ENCODE measurements at regions of chr19 and their contacts with region 1.

Region 1: DNA sequence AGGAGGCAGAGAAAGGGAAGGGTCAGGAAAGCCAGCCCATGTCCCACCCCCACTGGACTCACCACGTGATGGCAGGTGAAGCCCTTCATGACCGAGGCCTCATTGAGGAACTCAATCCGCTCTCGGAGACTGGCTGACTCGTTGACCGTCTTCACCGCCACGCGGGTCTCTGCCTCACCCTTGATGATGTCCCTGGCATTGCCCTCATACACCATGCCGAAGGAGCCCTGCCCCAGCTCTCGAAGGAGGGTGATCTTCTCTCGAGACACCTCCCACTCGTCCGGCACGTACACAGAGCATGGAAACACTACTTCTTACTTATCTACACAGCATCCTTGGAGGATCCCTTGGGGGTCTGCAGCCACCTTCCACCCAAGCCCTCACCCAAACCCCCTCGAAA is 55.7 kb downstream of the ZNF557 start:
- DNase-seq: no peak
- ATAC-seq: no peak
- H3K4me3 ChIP-seq: no peak overlapping the region
- H3K27ac ChIP-seq: no peak overlapping the region
- H3K4me1 ChIP-seq: no peaks in the 10 kb centered on the region
- H3K27me3 ChIP-seq: no peaks in the 10 kb centered on the region
- CTCF ChIP-seq: no peak

Region 2: DNA sequence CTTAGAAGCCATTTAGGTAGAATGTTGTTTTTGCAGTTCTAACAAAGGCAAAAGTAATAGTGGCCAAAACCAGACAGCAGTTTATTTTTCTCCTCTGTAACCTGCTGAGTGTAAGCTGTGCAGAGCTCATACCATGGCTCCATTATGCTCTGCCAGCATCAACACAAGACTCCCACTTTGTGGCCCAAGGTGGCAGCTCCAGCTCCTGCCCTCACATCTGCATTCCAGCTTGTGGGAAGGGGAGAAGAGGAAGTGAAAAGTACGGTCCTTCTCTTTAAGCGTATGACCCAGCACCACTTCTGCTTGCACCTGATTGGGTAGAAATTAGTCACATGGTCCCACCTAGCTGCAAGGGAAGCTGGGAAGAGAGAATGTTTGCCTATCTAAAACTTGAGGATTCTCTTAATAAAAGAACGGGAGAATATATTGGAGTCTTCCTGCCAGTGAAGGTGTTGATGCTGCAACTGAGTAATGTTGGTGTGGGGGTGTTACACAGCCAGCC is 218.6 kb before region 1 on chr19:
- CTCF ChIA-PET with region 1: no interaction called
- POLR2A ChIA-PET with region 1: no interaction called
- in situ Hi-C with region 1: no loop called
- intact Hi-C with region 1: no loop called
- DNase-seq: no peak
- ATAC-seq: no peak
- H3K4me3 ChIP-seq: no peak overlapping the region
- H3K27ac ChIP-seq: no peak overlapping the region
- H3K4me1 ChIP-seq: no peaks in the 10 kb centered on the region
- H3K27me3 ChIP-seq: no peaks in the 10 kb centered on the region
- CTCF ChIP-seq: no peak

Region 3: DNA sequence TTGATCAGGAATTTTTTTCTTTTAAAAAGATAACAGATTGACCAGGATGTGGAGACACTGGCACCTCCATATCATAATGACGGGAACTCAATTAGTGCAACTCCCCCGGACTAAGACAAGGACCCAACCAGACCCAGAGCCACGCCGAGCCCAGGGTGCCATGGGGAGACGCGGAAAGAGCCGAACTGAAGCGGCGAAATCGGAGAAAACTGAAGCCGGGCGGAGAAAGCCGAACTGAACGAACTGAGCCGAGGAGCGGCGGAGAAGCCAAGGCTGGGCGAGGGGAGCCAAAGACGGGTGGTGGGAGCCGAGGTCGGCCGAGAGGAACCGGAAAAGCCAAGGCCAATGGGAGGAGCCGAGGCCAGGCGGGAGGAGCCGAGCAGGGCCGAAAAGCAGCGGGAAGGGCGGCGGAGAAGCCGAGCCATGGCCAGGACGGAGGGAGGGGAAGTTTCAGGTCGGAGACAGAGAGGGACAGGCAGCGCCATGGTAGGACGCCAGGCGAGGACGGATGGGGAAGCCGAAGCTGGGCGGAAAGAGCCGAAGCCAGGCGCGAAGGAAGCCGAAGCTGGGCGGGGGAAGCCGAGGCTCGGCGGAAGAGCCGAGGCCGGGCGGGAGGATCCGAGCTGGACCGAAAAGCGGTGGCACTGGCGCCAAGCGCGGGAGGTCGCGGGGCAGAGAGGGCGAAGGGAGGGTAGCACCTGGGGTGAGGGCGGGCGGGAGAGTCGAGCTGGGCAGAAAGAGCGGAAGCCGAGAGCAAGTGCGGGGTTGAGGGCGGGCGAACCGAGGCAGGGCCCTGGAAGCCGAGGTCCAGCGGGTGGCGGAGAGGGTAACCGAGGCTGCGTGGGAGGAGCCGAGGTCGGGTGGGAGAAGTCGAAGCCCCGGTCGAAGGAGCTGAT is 26.3 kb before region 1 on chr19:
- CTCF ChIA-PET with region 1: no interaction called
- POLR2A ChIA-PET with region 1: no interaction called
- in situ Hi-C with region 1: no loop called
- intact Hi-C with region 1: no loop called
- DNase-seq: peak; percentile 53
- ATAC-seq: peak; percentile 95
- H3K4me3 ChIP-seq: peak overlapping the region; percentile 66 to 71
- H3K27ac ChIP-seq: peak overlapping the region; percentile 89
- H3K4me1 ChIP-seq: no peaks in the 10 kb centered on the region; the same call in 1 of the 2 replicates
- H3K27me3 ChIP-seq: no peaks in the 10 kb centered on the region
- CTCF ChIP-seq: no peak

Region 4: DNA sequence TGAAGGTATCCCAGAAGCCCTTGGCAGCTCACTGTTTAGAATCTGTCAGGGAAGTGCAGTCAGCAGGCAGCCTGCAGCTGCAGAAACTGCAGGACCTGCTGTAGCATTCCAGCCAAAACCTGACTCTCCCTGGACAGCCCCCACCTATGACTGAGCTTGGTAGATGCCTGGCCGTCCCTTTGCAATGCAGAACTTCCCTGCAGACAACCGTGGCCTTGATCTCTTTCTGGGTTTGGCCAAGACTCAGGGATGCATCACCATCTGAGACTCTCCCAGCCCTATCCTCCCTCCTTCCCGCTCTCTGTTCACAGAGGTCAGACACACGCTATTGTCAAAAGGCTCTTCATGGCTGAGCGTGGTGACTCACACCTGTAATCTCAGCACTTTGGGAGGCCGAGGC is 43.7 kb after region 1 on chr19:
- CTCF ChIA-PET with region 1: no interaction called
- POLR2A ChIA-PET with region 1: no interaction called
- in situ Hi-C with region 1: no loop called
- intact Hi-C with region 1: no loop called
- DNase-seq: no peak
- ATAC-seq: no peak
- H3K4me3 ChIP-seq: no peak overlapping the region
- H3K27ac ChIP-seq: no peak overlapping the region
- H3K4me1 ChIP-seq: no peaks in the 10 kb centered on the region
- H3K27me3 ChIP-seq: no peaks in the 10 kb centered on the region
- CTCF ChIP-seq: no peak

Region 5: GRCh38 chr19:7356899-7357627 is 231.8 kb after region 1 on chr19:
- CTCF ChIA-PET with region 1: no interaction called
- POLR2A ChIA-PET with region 1: interaction called, 15 read pairs
- in situ Hi-C with region 1: no loop called
- intact Hi-C with region 1: no loop called
- DNase-seq: no peak
- ATAC-seq: no peak
- H3K4me3 ChIP-seq: no peak overlapping the region
- H3K27ac ChIP-seq: no peak overlapping the region
- H3K4me1 ChIP-seq: no peaks in the 10 kb centered on the region
- H3K27me3 ChIP-seq: no peaks in the 10 kb centered on the region
- CTCF ChIP-seq: no peak